HepG2 (cell line): ENCODE measurements at regions of chr13 and their contacts with region 1.

Region 1: GRCh38 chr13:75666646-75667351 is 30.7 kb downstream of the LMO7 start:
- DNase-seq: no peak
- ATAC-seq: no peak
- H3K4me3 ChIP-seq: no peak overlapping the region
- H3K27ac ChIP-seq: no peak overlapping the region
- H3K4me1 ChIP-seq: peaks cover 12% of the 10 kb centered on the region
- H3K27me3 ChIP-seq: no peaks in the 10 kb centered on the region
- CTCF ChIP-seq: no peak
- EP300 ChIP-seq: no peak
- POLR2A ChIP-seq: no peak
- RAD21 ChIP-seq: no peak

Region 2: GRCh38 chr13:75600371-75600770 is 66.4 kb before region 1 on chr13:
- CTCF ChIA-PET with region 1: no interaction called
- POLR2A ChIA-PET with region 1: no interaction called
- in situ Hi-C with region 1: loop called (anchors 5 kb)
- intact Hi-C with region 1: loop called (anchors 5 kb)
- DNase-seq: no peak
- ATAC-seq: no peak
- H3K4me3 ChIP-seq: no peak overlapping the region
- H3K27ac ChIP-seq: no peak overlapping the region
- H3K4me1 ChIP-seq: no peaks in the 10 kb centered on the region
- H3K27me3 ChIP-seq: no peaks in the 10 kb centered on the region
- CTCF ChIP-seq: no peak
- EP300 ChIP-seq: no peak
- POLR2A ChIP-seq: no peak
- RAD21 ChIP-seq: no peak

Region 3: GRCh38 chr13:75635828-75636435 is 30.9 kb before region 1 on chr13 and contains the start of gene LMO7:
- CTCF ChIA-PET with region 1: no interaction called
- POLR2A ChIA-PET with region 1: interaction called, 3 read pairs
- in situ Hi-C with region 1: no loop called
- intact Hi-C with region 1: loop called (anchors 5 kb)
- DNase-seq: peak; percentile 48
- ATAC-seq: peak; percentile 76
- H3K4me3 ChIP-seq: peak within 1 kb of the TSS; percentile 63 to 85 (median 84)
- H3K27ac ChIP-seq: peak within 1 kb of the TSS; percentile 24
- H3K4me1 ChIP-seq: peaks cover 36% of the 10 kb centered on the region
- H3K27me3 ChIP-seq: no peaks in the 10 kb centered on the region; a peak in 1 of 5 replicates
- CTCF ChIP-seq: no peak
- EP300 ChIP-seq: no peak
- POLR2A ChIP-seq: peak in 1 of 2 experiments; percentile 68; a peak in 2 of 4 replicates
- RAD21 ChIP-seq: no peak
- total RNA-seq, gene LMO7: 47.7 and 121 TPM in 2 replicates

Region 4: DNA sequence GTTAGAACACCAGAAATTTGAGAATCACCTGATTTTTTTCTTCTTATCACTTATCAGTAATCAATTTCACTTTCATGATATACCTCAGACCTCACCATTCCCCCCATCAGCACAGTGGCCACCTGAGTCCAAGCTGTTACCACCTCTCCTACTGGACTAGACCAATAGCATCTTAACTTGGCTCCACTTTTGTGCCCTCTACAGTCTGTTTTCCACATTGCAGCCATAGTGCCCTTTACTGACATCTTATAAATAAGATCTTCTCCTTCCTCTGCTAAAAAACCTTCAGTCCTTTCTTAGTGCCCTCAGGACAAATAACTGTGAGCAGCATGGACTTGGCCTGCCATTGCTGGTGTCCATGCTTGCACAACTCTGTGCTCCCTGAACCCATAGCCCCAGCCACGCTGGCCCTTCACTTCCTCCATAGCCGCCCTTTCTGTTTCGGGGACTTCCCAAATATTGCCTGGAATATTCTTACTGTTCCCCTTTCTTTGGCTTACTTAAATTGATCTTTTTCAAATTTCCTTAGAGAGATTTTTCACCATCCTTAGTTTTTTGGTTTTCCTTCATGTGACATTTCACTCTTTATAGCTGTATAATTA is 350.1 kb after region 1 on chr13:
- CTCF ChIA-PET with region 1: no interaction called
- POLR2A ChIA-PET with region 1: no interaction called
- in situ Hi-C with region 1: loop called (anchors 25 kb)
- intact Hi-C with region 1: no loop called
- DNase-seq: peak; percentile 25
- ATAC-seq: peak; percentile 53
- H3K4me3 ChIP-seq: no peak overlapping the region
- H3K27ac ChIP-seq: no peak overlapping the region
- H3K4me1 ChIP-seq: 0 out of 2 replicates have a peak, but pooled peaks cover 6% of the 10 kb centered on the region
- H3K27me3 ChIP-seq: no peaks in the 10 kb centered on the region
- CTCF ChIP-seq: 0 out of 2 replicates have a peak, but pooled peaks have one; percentile 27
- EP300 ChIP-seq: no peak
- POLR2A ChIP-seq: no peak
- RAD21 ChIP-seq: no peak